Activated CD4-positive, alpha-beta T cell treated with anti-CD3 and anti-CD28 coated beads, Interleukin-2, amount 10 ng/mL, durations not matched to agents 24 days and 14 days (primary cell): ENCODE measurements at regions of chr1 and their contacts with region 1.

Region 1: DNA sequence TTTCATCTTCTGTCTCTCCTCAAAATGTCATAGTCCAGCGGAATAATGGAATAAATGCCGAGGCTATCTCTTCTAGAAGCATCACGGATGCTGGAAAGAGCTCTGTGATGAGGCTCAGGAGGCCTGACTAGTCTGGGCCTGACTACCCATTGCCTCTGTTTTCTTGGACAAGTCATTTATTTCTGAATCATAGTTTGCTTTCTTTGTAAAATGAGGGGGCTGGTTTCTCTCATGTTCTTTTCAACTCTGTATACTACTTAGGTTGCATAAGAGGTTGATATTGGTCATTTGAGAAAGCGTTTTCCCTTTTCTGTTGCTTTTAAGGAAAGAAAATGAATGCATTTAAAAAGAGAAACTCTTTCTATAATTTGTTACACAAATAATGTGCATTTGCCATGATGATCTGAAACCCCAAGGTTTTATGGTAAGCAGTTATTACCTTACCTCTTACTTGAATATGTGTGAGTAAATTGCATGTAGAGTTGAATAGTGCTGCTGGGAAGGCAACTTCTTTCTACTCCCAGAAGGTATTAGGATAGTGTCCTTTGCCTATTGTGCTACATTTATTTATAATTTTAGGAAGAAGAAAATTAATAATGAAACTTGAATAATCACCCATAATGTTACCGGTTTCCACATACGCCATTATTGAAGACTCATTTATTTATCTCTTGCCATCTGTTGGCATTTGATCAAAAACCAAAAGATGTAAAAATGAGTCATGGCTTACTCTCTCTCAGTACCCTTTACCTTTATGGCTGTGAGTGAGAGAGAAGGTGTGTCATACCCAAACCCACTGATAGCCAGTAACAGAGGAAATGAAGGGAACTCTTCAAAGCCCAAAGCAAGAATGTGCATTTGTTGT is 179.1 kb downstream of the FASLG start:
- DNase-seq: peak; percentile 79
- H3K4me3 Mint-ChIP-seq: no peak overlapping the region
- H3K27ac Mint-ChIP-seq: peak overlapping the region; percentile 38
- H3K4me1 Mint-ChIP-seq: peaks cover 28% of the 10 kb centered on the region
- H3K27me3 Mint-ChIP-seq: peaks cover 54% of the 10 kb centered on the region

Region 2: GRCh38 chr1:172588296-172589291 is 249.5 kb before region 1 on chr1:
- intact Hi-C with region 1: loop called (anchors 5 kb)
- DNase-seq: no peak
- H3K4me3 Mint-ChIP-seq: no peak overlapping the region
- H3K27ac Mint-ChIP-seq: peak overlapping the region; percentile 85
- H3K4me1 Mint-ChIP-seq: peaks cover 12% of the 10 kb centered on the region
- H3K27me3 Mint-ChIP-seq: no peaks in the 10 kb centered on the region

Region 3: GRCh38 chr1:172818841-172819527 is 19.1 kb before region 1 on chr1:
- intact Hi-C with region 1: loop called (anchors 2 kb)
- DNase-seq: peak; percentile 80
- H3K4me3 Mint-ChIP-seq: peak overlapping the region; percentile 77
- H3K27ac Mint-ChIP-seq: peak overlapping the region; percentile 82
- H3K4me1 Mint-ChIP-seq: peaks cover 41% of the 10 kb centered on the region
- H3K27me3 Mint-ChIP-seq: peaks cover 14% of the 10 kb centered on the region

Region 4: DNA sequence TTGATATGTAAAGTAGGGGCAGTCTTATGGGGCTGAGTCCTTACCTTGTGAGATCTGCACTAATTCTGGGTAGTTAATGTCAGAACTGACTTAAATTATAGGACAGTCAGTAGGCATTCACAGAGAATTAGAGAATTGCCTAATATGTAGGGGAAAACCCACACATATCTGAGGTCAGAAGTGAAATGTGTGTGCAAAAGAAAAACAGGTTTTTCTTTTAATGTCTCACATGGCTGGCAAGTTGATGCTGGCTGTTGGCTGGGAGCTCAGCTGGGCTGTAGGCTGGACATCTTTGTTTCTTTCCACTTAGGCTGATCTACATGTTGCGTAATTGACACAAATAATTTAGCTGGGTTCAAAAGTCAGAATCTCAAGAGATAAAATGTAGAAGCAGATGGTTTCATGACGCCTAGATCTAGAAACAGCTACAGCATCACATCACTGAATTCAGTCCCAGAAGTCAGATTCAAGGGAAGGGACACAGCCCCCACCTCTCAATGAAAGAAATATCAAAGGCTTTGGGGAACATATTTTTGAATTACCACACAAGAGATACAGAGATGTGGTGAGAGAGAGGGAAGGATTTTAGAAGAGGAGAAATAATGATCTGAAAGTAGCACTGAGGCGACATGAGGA is 113.8 kb after region 1 on chr1:
- intact Hi-C with region 1: no loop called
- DNase-seq: no peak
- H3K4me3 Mint-ChIP-seq: no peak overlapping the region
- H3K27ac Mint-ChIP-seq: no peak overlapping the region
- H3K4me1 Mint-ChIP-seq: peaks cover 7% of the 10 kb centered on the region
- H3K27me3 Mint-ChIP-seq: peaks cover 40% of the 10 kb centered on the region

Region 5: GRCh38 chr1:173297798-173298391 is 459.8 kb after region 1 on chr1:
- intact Hi-C with region 1: loop called (anchors 2 kb)
- DNase-seq: peak; percentile 68
- H3K4me3 Mint-ChIP-seq: no peak overlapping the region
- H3K27ac Mint-ChIP-seq: peak overlapping the region; percentile 51
- H3K4me1 Mint-ChIP-seq: peaks cover 20% of the 10 kb centered on the region
- H3K27me3 Mint-ChIP-seq: peaks cover 22% of the 10 kb centered on the region